Ascending aorta (tissue), 2 donors: ENCODE measurements at regions of chr22 and their contacts with region 1.

Region 1: GRCh38 chr22:17171313-17172171 is 12.5 kb upstream of the HDHD5 start:
- DNase-seq: peak; percentile 42 to 94
- H3K4me3 ChIP-seq: peak overlapping the region; percentile 78 to 92
- H3K27ac ChIP-seq: peak overlapping the region; percentile 93 to 98
- H3K4me1 ChIP-seq: peaks cover 0 to 10% of the 10 kb centered on the region in 2 donors
- H3K27me3 ChIP-seq: no peaks in the 10 kb centered on the region
- CTCF ChIP-seq: peak; percentile 78 to 89 (median 83)

Region 2: GRCh38 chr22:17084554-17085276 is 86.8 kb before region 1 on chr22 and contains the start of gene IL17RA:
- intact Hi-C with region 1: loop called (anchors 1 kb)
- DNase-seq: peak; percentile 57 to 94
- H3K4me3 ChIP-seq: peak within 1 kb of the TSS; percentile 73 to 97
- H3K27ac ChIP-seq: peak within 1 kb of the TSS; percentile 78 to 94
- H3K4me1 ChIP-seq: peaks cover 4 to 8% of the 10 kb centered on the region in 2 donors
- H3K27me3 ChIP-seq: no peaks in the 10 kb centered on the region
- CTCF ChIP-seq: no peak
- total RNA-seq, gene IL17RA: 84.1 TPM

Region 3: GRCh38 chr22:17121227-17122195 is 50.0 kb before region 1 on chr22 and contains the start of gene TMEM121B:
- intact Hi-C with region 1: loop called (anchors 5 kb)
- DNase-seq: peak in 1 of 2 donors; percentile 74
- H3K4me3 ChIP-seq: peak within 1 kb of the TSS; percentile 49 to 67
- H3K27ac ChIP-seq: no peak within 1 kb of the TSS
- H3K4me1 ChIP-seq: peaks cover 3 to 6% of the 10 kb centered on the region in 2 donors
- H3K27me3 ChIP-seq: peaks cover 6% of the 10 kb centered on the region
- CTCF ChIP-seq: no peak
- total RNA-seq, gene TMEM121B: 0.11 TPM

Region 4: DNA sequence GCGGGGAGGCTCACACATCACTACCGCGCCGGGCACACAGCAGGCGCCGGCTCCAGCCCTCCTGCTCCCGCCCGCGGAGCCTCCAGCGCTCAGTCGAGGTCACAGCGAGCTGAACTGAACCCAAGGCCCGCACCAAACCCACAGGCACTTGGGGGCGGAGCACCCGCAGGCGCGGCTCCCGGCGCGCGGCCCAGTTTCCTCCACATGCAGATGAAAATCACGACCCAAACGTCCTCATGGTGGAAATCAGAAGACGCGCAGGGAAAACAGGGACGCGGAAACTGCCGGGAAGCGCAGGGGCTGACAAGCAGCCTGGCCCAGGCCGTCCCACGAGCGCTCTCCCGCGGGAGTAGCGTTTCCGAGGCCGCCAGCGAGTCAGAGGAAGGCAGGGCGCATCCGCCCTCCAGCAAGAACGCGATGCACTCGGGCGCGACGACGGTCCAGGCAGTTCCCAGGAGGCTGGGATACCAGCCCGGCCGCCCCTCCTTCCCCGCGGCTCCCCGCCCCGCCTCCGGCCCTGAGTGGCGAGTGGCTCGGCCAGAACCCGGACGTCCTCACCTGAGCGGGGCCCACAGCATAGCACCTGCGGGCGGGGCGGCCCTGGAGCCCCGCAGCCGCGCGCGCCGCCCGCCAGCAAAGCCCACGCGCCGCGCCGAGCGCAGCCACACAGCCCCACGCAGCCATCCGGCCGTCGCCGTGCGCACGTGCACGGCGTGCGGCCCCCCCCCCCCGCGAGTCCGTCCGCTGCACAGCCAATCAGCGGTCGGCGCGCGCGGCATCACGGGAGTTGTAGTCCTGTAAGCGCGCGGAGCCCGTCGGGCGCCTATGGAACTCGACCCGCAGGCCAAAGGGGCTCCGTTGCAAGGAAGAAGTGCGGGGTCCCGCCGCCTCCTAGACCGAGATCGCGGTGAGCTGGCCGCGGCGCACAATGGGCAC is 12.7 kb before region 1 on chr22 and contains the start of gene HDHD5:
- intact Hi-C with region 1: loop called (anchors 1 kb)
- DNase-seq: peak; percentile 31 to 93
- H3K4me3 ChIP-seq: peak within 1 kb of the TSS; percentile 73 to 81
- H3K27ac ChIP-seq: peak within 1 kb of the TSS; percentile 90
- H3K4me1 ChIP-seq: peaks cover 9 to 20% of the 10 kb centered on the region in 2 donors
- H3K27me3 ChIP-seq: no peaks in the 10 kb centered on the region
- CTCF ChIP-seq: no peak
- total RNA-seq, gene HDHD5: 55.8 TPM

Region 5: DNA sequence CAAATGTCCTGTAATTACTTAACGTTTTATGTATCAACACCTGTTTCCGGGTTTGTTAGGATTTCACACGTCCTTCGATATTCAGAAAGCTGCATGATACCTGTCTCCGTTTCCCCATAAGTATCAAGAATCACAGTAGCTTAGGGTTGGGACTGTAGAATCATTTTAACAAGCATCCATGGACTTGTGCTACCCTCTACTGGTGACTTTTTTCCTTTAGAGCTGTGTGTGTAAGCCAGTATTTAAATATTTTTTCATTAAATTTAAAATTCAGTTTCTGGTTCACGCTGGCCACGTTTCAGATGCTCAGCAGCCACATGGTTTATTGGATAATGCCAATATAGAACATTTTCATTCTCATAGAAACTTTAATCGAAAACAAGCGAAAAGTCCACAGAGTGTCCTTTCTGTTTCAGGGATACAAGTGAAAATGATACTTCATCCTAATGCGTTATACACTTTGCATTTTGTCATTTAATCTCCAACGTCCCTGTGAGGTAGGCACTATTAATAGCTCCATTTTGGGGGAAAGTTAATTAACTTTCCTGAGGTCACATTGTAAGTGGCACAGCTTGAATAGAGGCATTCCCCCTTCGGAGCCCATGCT is 330.2 kb after region 1 on chr22:
- intact Hi-C with region 1: loop called (anchors 5 kb)
- DNase-seq: no peak
- H3K4me3 ChIP-seq: no peak overlapping the region
- H3K27ac ChIP-seq: no peak overlapping the region
- H3K4me1 ChIP-seq: no peaks in the 10 kb centered on the region
- H3K27me3 ChIP-seq: no peaks in the 10 kb centered on the region
- CTCF ChIP-seq: peak; percentile 48 to 62 (median 53)